Heart right ventricle (tissue), 16 donors: ENCODE measurements at regions of chr3 and their contacts with region 1.

Region 1: GRCh38 chr3:100073899-100074307 is 40.4 kb downstream of the FILIP1L start:
- DNase-seq: peak; percentile 32 to 67
- ATAC-seq: peak in 7 of 8 donors; percentile 50 to 85 (median 72)
- H3K4me3 ChIP-seq: peak overlapping the region in 1 of 10 donors; percentile 15
- H3K27ac ChIP-seq: peak overlapping the region; percentile 24 to 87 (median 66)
- H3K4me1 ChIP-seq: peaks cover 0 to 71% (median 55%) of the 10 kb centered on the region in 9 donors
- H3K27me3 ChIP-seq: no peaks in the 10 kb centered on the region
- CTCF ChIP-seq: no peak

Region 2: DNA sequence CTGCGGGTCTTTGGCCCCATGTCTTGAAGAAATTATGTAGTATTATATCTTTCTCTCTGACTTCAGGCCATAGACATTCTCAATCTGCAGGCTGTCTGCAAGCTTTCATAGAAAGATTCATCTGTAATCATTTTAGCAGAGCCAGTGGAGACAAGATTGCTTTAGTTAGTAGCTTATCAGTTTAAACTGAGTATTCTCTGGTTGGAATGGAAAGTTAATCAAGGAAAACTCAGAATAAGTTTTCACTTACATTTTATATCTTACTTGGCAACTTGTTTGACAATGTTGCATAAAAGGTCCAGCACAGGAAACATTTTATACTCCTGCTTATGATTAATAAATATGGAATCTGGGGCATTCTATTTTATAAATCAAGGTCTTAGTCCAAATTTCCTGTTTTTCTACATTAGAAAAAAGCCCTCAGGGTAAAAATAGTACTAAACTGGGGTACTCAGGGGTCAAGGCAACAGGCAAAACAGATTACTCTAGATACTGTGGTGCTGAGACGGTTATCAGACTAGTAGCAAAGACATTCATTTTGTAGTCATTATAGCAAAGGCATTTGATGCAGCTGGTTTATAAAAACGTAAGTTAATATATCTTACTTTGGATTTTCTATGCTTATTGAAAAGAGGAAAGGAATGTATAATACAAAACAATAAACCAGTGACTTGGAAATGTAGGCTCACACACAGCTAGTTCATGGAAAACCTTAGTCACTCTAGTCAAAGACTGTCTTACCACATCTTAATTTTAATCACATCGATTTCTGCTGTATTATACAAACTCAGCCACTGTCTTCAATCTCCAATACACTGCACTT is 85.6 kb after region 1 on chr3:
- intact Hi-C with region 1: loop called in 2 of 10 experiments (anchors 10 kb)
- DNase-seq: no peak
- ATAC-seq: peak in 5 of 8 donors; percentile 31 to 36 (median 35)
- H3K4me3 ChIP-seq: no peak overlapping the region
- H3K27ac ChIP-seq: peak overlapping the region; percentile 3 to 83 (median 65)
- H3K4me1 ChIP-seq: peaks cover 5 to 69% (median 46%) of the 10 kb centered on the region in 9 donors
- H3K27me3 ChIP-seq: no peaks in the 10 kb centered on the region
- CTCF ChIP-seq: no peak

Region 3: GRCh38 chr3:100169201-100169920 is 95.5 kb after region 1 on chr3:
- intact Hi-C with region 1: loop called in 3 of 10 experiments (anchors 5 to 10 kb)
- DNase-seq: peak; percentile 30 to 39
- ATAC-seq: peak in 4 of 8 donors; percentile 33 to 66 (median 44)
- H3K4me3 ChIP-seq: no peak overlapping the region
- H3K27ac ChIP-seq: peak overlapping the region in 6 of 10 donors; percentile 5 to 62 (median 38)
- H3K4me1 ChIP-seq: peaks cover 11 to 50% (median 25%) of the 10 kb centered on the region in 9 donors
- H3K27me3 ChIP-seq: no peaks in the 10 kb centered on the region
- CTCF ChIP-seq: no peak

Region 4: DNA sequence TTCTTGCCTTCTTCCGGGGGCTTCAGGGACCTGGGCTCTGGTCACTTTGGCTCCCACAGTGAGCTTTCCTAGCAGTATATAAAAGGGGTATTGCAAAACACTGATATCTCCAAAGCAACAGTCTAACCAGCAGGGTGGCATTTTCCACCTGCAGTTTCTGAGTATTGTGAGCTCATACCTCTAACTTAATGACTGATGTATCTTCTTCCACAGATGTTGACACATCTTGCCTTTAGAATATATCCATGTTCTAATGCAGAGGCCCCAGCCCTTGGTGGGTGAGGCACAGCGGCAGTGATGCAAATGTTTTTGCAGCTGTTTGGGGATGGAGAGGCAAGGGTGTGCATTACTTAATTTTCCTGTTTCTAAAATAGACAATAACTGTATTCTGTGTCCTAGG is 489.8 kb after region 1 on chr3:
- intact Hi-C with region 1: no loop called
- DNase-seq: no peak
- ATAC-seq: no peak
- H3K4me3 ChIP-seq: no peak overlapping the region
- H3K27ac ChIP-seq: no peak overlapping the region
- H3K4me1 ChIP-seq: peaks cover 0 to 8% (median 0%) of the 10 kb centered on the region in 9 donors
- H3K27me3 ChIP-seq: no peaks in the 10 kb centered on the region
- CTCF ChIP-seq: no peak